A549 (cell line): ENCODE measurements at regions of chr17 and their contacts with region 1.

Region 1: GRCh38 chr17:33750943-33751701 is 458.0 kb upstream of the ASIC2 start:
- DNase-seq: peak; percentile 32 to 57
- ATAC-seq: peak; percentile 85 to 92
- H3K4me3 ChIP-seq: peak overlapping the region; percentile 8; the same call in 1 of the 3 replicates
- H3K27ac ChIP-seq: no peak overlapping the region
- H3K4me1 ChIP-seq: no peaks in the 10 kb centered on the region
- CTCF ChIP-seq: peak; percentile 70
- EP300 ChIP-seq: no peak
- POLR2A ChIP-seq: no peak
- RAD21 ChIP-seq: peak; percentile 86 to 93

Region 2: DNA sequence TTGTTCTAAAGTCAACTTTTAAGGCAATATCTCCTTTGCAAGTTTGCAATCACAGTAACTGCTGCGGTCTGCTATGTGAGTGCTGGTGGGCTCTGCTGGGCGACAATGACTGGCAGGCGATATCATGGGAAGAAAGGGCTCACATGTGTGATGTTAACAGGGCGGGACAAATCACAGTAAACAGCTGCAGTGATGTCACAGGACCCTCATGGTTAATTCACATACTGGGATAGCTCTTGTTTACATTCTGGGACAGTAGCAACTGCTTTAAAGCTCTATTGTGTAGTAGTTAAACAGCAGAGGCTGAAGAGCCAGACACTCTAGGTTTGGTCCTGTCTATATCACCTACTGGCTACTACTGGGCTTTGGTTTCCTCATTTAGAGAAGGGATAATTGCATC is 200.9 kb before region 1 on chr17:
- CTCF ChIA-PET with region 1: no interaction called
- POLR2A ChIA-PET with region 1: no interaction called
- DNase-seq: no peak
- ATAC-seq: no peak
- H3K4me3 ChIP-seq: no peak overlapping the region
- H3K27ac ChIP-seq: no peak overlapping the region
- H3K4me1 ChIP-seq: no peaks in the 10 kb centered on the region
- CTCF ChIP-seq: no peak
- EP300 ChIP-seq: no peak
- POLR2A ChIP-seq: no peak
- RAD21 ChIP-seq: no peak

Region 3: GRCh38 chr17:33739714-33740113 is 11.4 kb before region 1 on chr17:
- CTCF ChIA-PET with region 1: interaction called, 39 read pairs
- POLR2A ChIA-PET with region 1: no interaction called
- DNase-seq: no peak
- ATAC-seq: no peak
- H3K4me3 ChIP-seq: no peak overlapping the region
- H3K27ac ChIP-seq: no peak overlapping the region
- H3K4me1 ChIP-seq: no peaks in the 10 kb centered on the region
- CTCF ChIP-seq: no peak
- EP300 ChIP-seq: no peak
- POLR2A ChIP-seq: no peak
- RAD21 ChIP-seq: no peak

Region 4: GRCh38 chr17:33847900-33848299 is 96.8 kb after region 1 on chr17:
- CTCF ChIA-PET with region 1: no interaction called
- POLR2A ChIA-PET with region 1: no interaction called
- DNase-seq: no peak
- ATAC-seq: no peak
- H3K4me3 ChIP-seq: no peak overlapping the region
- H3K27ac ChIP-seq: no peak overlapping the region
- H3K4me1 ChIP-seq: no peaks in the 10 kb centered on the region
- CTCF ChIP-seq: no peak
- EP300 ChIP-seq: no peak
- POLR2A ChIP-seq: no peak
- RAD21 ChIP-seq: no peak